Naive thymus-derived CD8-positive, alpha-beta T cell (primary cell): ENCODE measurements at regions of chr16 and their contacts with region 1.

Region 1: DNA sequence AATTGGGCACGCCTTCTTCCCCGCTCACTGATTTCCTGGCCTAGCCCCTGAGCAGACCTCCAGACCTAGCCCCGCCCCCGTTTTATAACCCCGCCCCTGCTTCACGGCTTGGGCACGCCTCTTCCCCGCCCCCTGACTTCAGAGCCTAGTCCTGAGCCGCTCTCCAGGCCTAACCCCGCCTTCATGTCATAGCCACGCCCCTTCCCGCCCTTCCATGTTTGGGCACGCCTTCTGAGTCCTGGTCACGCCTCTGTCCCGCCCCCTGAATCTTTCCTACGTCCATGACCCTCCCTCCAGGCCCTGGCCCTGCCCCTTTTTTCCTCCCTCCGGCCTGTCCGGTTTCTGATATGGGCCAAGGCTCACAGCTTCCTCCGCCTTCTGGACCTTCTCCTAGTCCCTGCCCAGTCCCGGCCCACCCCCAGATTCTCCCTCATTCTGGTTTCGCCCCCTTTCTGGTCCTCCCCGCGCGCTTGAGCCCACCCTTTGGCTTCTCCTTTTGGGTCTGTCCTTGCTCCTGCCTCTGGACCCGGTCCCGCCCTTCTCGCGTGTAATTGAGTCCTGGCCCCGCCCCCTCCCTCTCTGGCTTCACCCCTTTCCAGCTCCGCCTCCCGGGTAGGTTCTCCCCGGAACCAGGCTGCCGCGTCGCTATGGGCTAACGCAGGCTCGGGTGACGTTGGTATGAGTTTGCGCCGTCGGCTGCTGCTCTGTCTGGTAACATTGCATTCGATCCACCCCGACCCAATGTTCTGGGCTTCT is 15.1 kb upstream of the EEF2K start:
- DNase-seq: peak; percentile 95 to 100 (median 99)
- ATAC-seq: peak; percentile 48 to 55
- H3K4me3 Mint-ChIP-seq: peak overlapping the region; percentile 81 to 96 (median 91)
- H3K27ac Mint-ChIP-seq: peak overlapping the region; percentile 97 to 100 (median 99)
- H3K4me1 Mint-ChIP-seq: peaks cover 38 to 75% (median 70%) of the 10 kb centered on the region in 4 donors
- H3K27me3 Mint-ChIP-seq: peaks cover 0 to 4% (median 0%) of the 10 kb centered on the region in 5 donors

Region 2: DNA sequence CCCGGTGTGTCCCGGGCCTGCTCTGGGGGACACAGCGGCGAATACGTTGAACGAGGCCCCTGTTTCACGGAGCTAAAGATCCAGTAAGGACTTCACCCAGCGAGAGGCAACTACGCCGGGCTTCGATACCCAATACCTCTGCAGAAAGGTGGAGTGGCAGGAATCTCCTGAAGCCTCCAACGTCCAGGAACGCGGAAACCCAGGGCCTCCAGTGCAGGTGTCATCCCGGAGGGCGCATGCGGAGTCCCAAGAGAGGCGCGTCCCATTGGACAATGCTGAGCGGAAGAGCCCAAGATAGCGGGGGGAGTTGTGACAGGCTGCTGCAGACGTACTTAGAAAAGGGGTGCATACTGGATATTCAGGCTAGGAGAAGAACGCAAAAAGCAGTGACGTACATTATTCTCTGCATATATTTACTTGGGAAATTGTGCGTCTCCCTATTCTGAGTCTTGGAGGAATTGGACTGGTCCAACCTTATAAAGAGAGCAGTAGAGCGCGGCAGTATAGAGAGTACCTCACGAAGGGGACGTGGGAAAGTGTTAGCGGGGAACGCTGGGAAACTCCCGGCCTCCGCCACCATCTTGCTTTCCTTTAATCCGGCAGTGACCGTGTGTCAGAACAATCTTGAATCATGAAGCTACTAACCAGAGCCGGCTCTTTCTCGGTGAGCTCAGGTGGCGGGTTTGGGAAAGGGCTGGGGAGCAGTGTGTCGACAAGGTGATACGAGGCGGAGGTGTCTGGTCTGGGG is 238.0 kb before region 1 on chr16 and contains the start of gene UQCRC2:
- POLR2A ChIA-PET with region 1: interaction called, 47 read pairs
- DNase-seq: peak; percentile 80 to 95 (median 86)
- ATAC-seq: peak; percentile 88 to 91
- H3K4me3 Mint-ChIP-seq: peak within 1 kb of the TSS; percentile 98 to 100 (median 100)
- H3K27ac Mint-ChIP-seq: peak within 1 kb of the TSS; percentile 98 to 100 (median 100)
- H3K4me1 Mint-ChIP-seq: peaks cover 18 to 76% (median 58%) of the 10 kb centered on the region in 4 donors
- H3K27me3 Mint-ChIP-seq: no peaks in the 10 kb centered on the region
- polyA plus RNA-seq, gene UQCRC2: 176 to 196 (median 180) TPM

Region 3: GRCh38 chr16:22001591-22001990 is 189.4 kb before region 1 on chr16:
- POLR2A ChIA-PET with region 1: interaction called, 84 read pairs
- DNase-seq: no peak
- ATAC-seq: no peak
- H3K4me3 Mint-ChIP-seq: peak overlapping the region in 5 of 10 donors; percentile 24 to 78 (median 54)
- H3K27ac Mint-ChIP-seq: peak overlapping the region in 2 of 10 donors; percentile 67 to 84
- H3K4me1 Mint-ChIP-seq: peaks cover 6 to 14% (median 12%) of the 10 kb centered on the region in 4 donors
- H3K27me3 Mint-ChIP-seq: peaks cover 0 to 1% (median 0%) of the 10 kb centered on the region in 5 donors

Region 4: DNA sequence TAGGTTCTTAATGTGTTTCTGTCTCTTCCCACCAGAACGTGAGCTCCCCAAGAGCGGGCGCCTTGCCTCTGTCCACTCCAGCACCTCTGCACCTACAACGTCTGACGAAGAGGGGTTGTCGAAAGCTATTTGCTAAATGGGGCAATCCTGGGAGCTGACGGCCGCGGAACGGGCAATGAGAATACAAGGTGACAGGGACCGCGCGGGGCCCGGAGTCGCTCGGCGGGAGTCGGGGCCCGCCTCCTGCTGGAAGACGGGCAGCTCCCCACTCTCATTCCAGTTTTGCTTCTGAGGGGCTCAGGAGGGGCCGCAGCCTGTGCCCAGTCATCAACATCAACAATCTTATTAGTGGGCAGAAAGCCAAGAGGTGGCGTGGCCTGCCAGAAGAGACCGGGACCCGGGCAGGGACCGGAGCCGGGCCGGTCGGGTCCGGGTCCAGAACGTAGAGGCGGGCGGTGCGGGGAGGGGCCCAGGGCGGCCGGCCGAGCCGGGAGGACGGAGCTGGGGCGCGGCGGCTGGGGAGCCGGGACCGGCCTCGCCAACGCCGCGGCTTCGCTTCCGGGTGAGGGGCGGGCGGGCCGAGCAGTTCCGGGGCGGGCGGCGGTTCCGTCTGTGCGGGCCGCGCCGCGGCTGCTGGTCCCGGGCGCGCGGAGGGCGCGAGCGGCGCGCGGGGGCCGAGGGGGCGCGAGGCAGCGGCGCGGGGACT is 183.3 kb before region 1 on chr16 and contains the start of gene MOSMO:
- POLR2A ChIA-PET with region 1: interaction called, 84 read pairs
- DNase-seq: peak; percentile 37 to 75 (median 64)
- ATAC-seq: peak; percentile 88 to 92
- H3K4me3 Mint-ChIP-seq: peak within 1 kb of the TSS; percentile 83 to 98 (median 90)
- H3K27ac Mint-ChIP-seq: peak within 1 kb of the TSS; percentile 80 to 96 (median 90)
- H3K4me1 Mint-ChIP-seq: peaks cover 30 to 52% (median 41%) of the 10 kb centered on the region in 4 donors
- H3K27me3 Mint-ChIP-seq: no peaks in the 10 kb centered on the region
- polyA plus RNA-seq, gene MOSMO: 4.7 to 6.5 (median 4.9) TPM

Region 5: DNA sequence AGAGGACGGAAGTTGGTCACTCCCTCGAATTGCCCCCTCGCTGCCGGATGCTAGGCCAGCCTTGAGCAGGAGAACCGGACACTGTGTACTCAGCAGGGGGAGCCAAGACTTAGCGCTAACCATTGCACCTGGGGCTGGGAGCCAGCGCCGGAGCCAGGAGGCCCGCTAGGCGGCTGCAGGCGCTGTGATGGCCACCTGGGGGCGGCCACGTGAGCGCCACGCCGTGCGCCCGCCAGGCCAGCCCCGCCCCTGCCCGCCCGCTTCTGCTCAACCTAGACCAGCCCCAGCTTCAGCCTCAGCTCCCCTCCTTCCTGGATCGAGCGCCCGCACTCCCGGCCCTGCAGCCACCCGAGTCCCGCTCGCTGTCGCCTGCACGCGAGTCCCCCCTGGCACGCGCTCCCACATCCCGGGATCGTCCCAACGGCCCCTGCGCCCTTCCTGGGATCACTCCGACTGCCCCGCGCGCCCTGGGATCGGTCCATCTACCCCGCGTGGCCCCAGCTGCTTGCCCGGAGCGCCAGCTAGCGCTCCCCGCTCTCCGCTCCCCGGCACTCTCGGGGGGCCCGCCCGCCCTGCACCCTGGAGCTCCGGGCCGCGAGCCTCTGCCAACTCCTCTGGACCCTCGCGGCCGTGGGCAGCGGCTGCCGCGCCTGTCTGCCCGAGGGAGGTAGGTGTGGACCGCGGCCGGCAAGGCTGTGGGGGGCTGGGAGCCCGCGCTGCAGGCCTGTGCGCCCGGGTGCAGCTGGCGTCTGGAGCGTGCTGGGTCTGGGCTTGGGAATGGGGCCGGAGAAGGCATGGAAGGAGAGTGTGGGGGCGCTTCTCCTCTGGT is 15.3 kb after region 1 on chr16 and contains the start of gene EEF2K:
- POLR2A ChIA-PET with region 1: interaction called, 162 read pairs
- DNase-seq: peak; percentile 58 to 86 (median 70)
- ATAC-seq: peak; percentile 86 to 91
- H3K4me3 Mint-ChIP-seq: peak within 1 kb of the TSS; percentile 90 to 99 (median 94)
- H3K27ac Mint-ChIP-seq: peak within 1 kb of the TSS; percentile 65 to 95 (median 90)
- H3K4me1 Mint-ChIP-seq: peaks cover 7 to 50% (median 37%) of the 10 kb centered on the region in 4 donors
- H3K27me3 Mint-ChIP-seq: no peaks in the 10 kb centered on the region
- polyA plus RNA-seq, gene EEF2K: 2.0 to 3.2 (median 3.1) TPM

Region 6: DNA sequence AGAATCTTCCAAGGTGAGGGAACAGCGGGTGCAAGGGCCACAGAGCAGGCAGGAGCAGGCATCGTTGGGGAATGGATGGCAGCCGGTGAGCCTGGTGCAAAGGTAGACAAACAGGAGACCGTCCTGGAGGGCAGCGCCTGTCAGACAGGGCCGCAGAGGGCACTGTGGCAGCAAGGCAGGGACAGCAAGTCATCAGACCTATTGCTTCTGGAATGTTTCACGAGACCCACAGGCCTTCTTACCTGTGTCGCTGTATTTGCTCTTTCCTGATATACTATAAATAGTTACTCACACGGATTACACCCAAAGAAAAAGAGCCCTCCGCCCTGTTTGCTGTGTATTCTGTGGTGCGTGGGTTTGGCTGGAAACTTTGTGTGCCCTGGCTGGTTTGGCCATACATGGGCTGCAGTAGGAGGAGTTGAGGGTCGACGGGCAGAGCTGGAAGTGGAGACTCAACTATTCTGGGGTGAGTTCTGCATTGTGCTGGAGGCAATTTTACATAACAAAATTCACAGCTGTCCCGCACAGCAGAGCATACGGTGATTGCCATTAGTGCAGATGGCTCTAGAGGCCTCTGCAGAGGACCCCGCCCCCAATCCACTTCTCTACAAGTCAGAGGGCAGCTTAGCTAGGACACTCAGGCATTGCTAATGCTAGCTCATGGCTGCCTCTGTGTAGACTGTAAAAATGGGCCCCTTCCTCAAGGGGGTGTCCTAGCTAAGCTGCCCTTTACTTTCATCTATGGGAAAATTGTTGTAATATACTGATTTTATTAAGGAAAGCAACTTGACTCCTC is 87.7 kb after region 1 on chr16:
- POLR2A ChIA-PET with region 1: no interaction called
- DNase-seq: no peak
- ATAC-seq: no peak
- H3K4me3 Mint-ChIP-seq: no peak overlapping the region
- H3K27ac Mint-ChIP-seq: peak overlapping the region in 2 of 10 donors; percentile 49 to 57
- H3K4me1 Mint-ChIP-seq: no peaks in the 10 kb centered on the region
- H3K27me3 Mint-ChIP-seq: no peaks in the 10 kb centered on the region

Region 7: DNA sequence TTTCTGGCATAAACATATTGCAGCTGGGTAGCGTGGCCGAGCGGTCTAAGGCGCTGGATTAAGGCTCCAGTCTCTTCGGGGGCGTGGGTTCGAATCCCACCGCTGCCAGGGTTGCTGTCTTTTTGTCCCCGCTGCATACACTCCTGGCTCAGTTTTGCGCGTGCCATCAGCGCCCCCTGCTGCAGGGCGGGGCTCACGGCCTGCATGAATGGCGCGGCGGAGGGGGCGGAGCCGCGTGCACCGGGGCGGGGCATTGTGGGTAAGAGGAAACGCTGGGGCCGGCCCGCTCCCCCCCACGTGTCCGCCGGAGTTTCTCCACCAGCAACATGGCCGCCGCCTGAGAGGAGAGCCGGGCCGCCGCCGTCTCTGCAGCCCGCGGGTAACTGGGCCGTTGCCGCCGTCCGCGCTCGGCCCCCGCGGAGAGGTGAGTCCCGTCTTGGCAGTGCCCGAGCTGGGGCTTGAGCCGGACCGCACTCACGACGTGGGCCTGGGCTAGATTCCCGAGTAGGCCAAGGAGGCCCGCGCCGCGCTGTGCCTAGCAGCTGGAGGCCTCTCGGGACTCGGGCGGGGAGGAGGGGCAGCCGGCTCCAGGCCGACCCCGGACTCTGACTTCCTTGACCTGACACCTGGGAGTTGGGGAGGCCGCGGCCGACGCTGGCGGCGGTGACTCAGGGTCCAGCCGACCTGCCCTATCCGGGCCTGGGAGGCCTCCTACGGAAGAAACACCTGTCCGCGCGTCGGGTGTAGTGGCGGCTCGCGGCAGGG is 106.3 kb after region 1 on chr16 and contains the start of gene POLR3E:
- POLR2A ChIA-PET with region 1: interaction called, 147 read pairs
- DNase-seq: peak; percentile 99 to 100 (median 100)
- ATAC-seq: peak; percentile 71 to 85
- H3K4me3 Mint-ChIP-seq: peak within 1 kb of the TSS; percentile 86 to 99 (median 96)
- H3K27ac Mint-ChIP-seq: peak within 1 kb of the TSS; percentile 94 to 100 (median 100)
- H3K4me1 Mint-ChIP-seq: peaks cover 33 to 57% (median 45%) of the 10 kb centered on the region in 4 donors
- H3K27me3 Mint-ChIP-seq: peaks cover 0 to 4% (median 0%) of the 10 kb centered on the region in 5 donors
- polyA plus RNA-seq, gene POLR3E: 11.1 to 13.9 (median 11.5) TPM